Transverse colon (tissue), 4 donors: ENCODE measurements at regions of chr2 and their contacts with region 1.

Region 1: GRCh38 chr2:189466660-189467059 is 25.4 kb downstream of the WDR75 start:
- DNase-seq: no peak
- H3K4me3 ChIP-seq: no peak overlapping the region
- H3K27ac ChIP-seq: no peak overlapping the region
- H3K4me1 ChIP-seq: peaks cover 0 to 11% (median 0%) of the 10 kb centered on the region in 4 donors
- H3K27me3 ChIP-seq: no peaks in the 10 kb centered on the region
- CTCF ChIP-seq: peak; percentile 51 to 62 (median 58)
- EP300 ChIP-seq: no peak
- POLR2A ChIP-seq: no peak

Region 2: GRCh38 chr2:188016917-188017316 is 1449.7 kb before region 1 on chr2:
- in situ Hi-C with region 1: no loop called
- intact Hi-C with region 1: no loop called
- DNase-seq: no peak
- H3K4me3 ChIP-seq: no peak overlapping the region
- H3K27ac ChIP-seq: no peak overlapping the region
- H3K4me1 ChIP-seq: no peaks in the 10 kb centered on the region
- H3K27me3 ChIP-seq: no peaks in the 10 kb centered on the region
- CTCF ChIP-seq: no peak
- EP300 ChIP-seq: no peak
- POLR2A ChIP-seq: no peak

Region 3: GRCh38 chr2:189425676-189426075 is 41.0 kb before region 1 on chr2:
- in situ Hi-C with region 1: no loop called
- intact Hi-C with region 1: no loop called
- DNase-seq: no peak
- H3K4me3 ChIP-seq: no peak overlapping the region
- H3K27ac ChIP-seq: no peak overlapping the region
- H3K4me1 ChIP-seq: no peaks in the 10 kb centered on the region
- H3K27me3 ChIP-seq: no peaks in the 10 kb centered on the region
- CTCF ChIP-seq: no peak
- EP300 ChIP-seq: no peak
- POLR2A ChIP-seq: no peak

Region 4: GRCh38 chr2:189579592-189580186 is 113.0 kb after region 1 on chr2:
- in situ Hi-C with region 1: loop called in 1 of 4 experiments (anchors 10 kb)
- intact Hi-C with region 1: no loop called
- DNase-seq: no peak
- H3K4me3 ChIP-seq: peak overlapping the region; percentile 57 to 78 (median 64)
- H3K27ac ChIP-seq: peak overlapping the region; percentile 91 to 94 (median 92)
- H3K4me1 ChIP-seq: peaks cover 9 to 72% (median 33%) of the 10 kb centered on the region in 4 donors
- H3K27me3 ChIP-seq: no peaks in the 10 kb centered on the region
- CTCF ChIP-seq: no peak
- EP300 ChIP-seq: no peak
- POLR2A ChIP-seq: no peak

Region 5: GRCh38 chr2:189633392-189633811 is 166.7 kb after region 1 on chr2:
- in situ Hi-C with region 1: loop called in 1 of 4 experiments (anchors 25 kb)
- intact Hi-C with region 1: no loop called
- DNase-seq: no peak
- H3K4me3 ChIP-seq: no peak overlapping the region
- H3K27ac ChIP-seq: no peak overlapping the region
- H3K4me1 ChIP-seq: no peaks in the 10 kb centered on the region
- H3K27me3 ChIP-seq: no peaks in the 10 kb centered on the region
- CTCF ChIP-seq: peak in 1 of 5 experiments; percentile 15
- EP300 ChIP-seq: no peak
- POLR2A ChIP-seq: no peak